Naive thymus-derived CD4-positive, alpha-beta T cell (primary cell): ENCODE measurements at regions of chr3 and their contacts with region 1.

Region 1: GRCh38 chr3:139329345-139329850 is 14.4 kb upstream of the MRPS22 start:
- DNase-seq: peak; percentile 68 to 95 (median 82)
- ATAC-seq: peak; percentile 98
- H3K4me3 ChIP-seq: no peak overlapping the region
- H3K4me3 Mint-ChIP-seq: peak overlapping the region; percentile 45 to 85 (median 70)
- H3K27ac ChIP-seq: no peak overlapping the region
- H3K27ac Mint-ChIP-seq: peak overlapping the region in 3 of 9 donors; percentile 10 to 40 (median 22)
- H3K4me1 ChIP-seq: peaks cover 0 to 5% of the 10 kb centered on the region in 2 donors
- H3K4me1 Mint-ChIP-seq: peaks cover 8 to 26% (median 19%) of the 10 kb centered on the region in 7 donors
- H3K27me3 ChIP-seq: no peaks in the 10 kb centered on the region
- H3K27me3 Mint-ChIP-seq: peaks cover 24 to 37% (median 29%) of the 10 kb centered on the region in 5 donors

Region 2: GRCh38 chr3:139088462-139089324 is 240.7 kb before region 1 on chr3:
- CTCF ChIA-PET with region 1: no interaction called
- POLR2A ChIA-PET with region 1: no interaction called
- intact Hi-C with region 1: no loop called
- DNase-seq: no peak
- ATAC-seq: no peak
- H3K4me3 ChIP-seq: no peak overlapping the region
- H3K4me3 Mint-ChIP-seq: no peak overlapping the region
- H3K27ac ChIP-seq: no peak overlapping the region
- H3K27ac Mint-ChIP-seq: no peak overlapping the region
- H3K4me1 ChIP-seq: no peaks in the 10 kb centered on the region
- H3K4me1 Mint-ChIP-seq: no peaks in the 10 kb centered on the region
- H3K27me3 ChIP-seq: no peaks in the 10 kb centered on the region
- H3K27me3 Mint-ChIP-seq: peaks cover 4 to 20% (median 18%) of the 10 kb centered on the region in 5 donors

Region 3: DNA sequence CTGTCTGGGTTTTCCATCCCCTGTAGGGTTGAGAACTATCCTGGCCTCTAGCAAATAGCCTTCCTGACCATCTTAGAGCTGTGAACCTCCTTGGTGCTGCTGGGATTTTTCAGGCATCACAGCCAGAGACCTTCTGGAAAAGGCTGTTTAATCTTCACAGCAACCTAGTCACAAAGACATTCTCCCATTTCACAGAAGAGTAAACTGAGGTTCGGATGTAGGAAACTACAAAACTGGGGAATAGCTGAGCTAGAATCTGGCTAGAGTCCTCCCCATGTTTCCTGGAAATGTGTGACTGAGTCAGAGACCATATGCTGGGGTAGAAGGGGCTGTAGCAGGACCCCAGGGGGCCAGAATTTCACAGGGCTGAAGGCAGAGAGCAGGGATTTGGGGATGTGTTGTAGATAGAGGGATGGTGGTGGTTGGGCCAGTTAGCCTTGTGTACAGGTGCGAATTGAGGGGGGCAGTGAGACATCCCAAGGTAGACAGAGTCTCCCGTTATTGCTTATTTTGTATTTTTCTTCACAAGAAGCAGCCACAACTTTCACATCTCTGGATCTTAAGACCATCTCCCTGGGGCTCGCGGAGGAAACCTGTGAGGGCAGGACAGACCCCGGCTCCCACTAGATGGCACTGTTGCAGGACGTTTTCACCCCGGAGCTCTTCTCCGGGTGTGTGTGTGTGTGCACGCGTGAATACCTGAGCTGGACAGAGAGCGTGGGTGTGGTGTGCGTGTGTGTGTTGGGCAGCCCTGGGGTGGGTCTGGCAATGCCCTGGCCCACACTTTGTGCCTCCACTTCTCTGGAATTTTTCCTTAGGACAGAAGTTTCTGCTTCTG is 217.8 kb before region 1 on chr3:
- CTCF ChIA-PET with region 1: interaction called, 3 read pairs
- POLR2A ChIA-PET with region 1: interaction called, 3 read pairs
- intact Hi-C with region 1: loop called in 1 of 2 experiments (anchors 2 kb)
- DNase-seq: peak in 8 of 9 donors; percentile 10 to 62 (median 36)
- ATAC-seq: peak; percentile 64
- H3K4me3 ChIP-seq: no peak overlapping the region
- H3K4me3 Mint-ChIP-seq: no peak overlapping the region
- H3K27ac ChIP-seq: no peak overlapping the region
- H3K27ac Mint-ChIP-seq: no peak overlapping the region
- H3K4me1 ChIP-seq: no peaks in the 10 kb centered on the region
- H3K4me1 Mint-ChIP-seq: peaks cover 0 to 7% (median 6%) of the 10 kb centered on the region in 7 donors
- H3K27me3 ChIP-seq: no peaks in the 10 kb centered on the region
- H3K27me3 Mint-ChIP-seq: peaks cover 13 to 33% (median 22%) of the 10 kb centered on the region in 5 donors